Right ventricle myocardium inferior (tissue), 1 donor: ENCODE measurements at regions of chr17 and their contacts with region 1.

Region 1: DNA sequence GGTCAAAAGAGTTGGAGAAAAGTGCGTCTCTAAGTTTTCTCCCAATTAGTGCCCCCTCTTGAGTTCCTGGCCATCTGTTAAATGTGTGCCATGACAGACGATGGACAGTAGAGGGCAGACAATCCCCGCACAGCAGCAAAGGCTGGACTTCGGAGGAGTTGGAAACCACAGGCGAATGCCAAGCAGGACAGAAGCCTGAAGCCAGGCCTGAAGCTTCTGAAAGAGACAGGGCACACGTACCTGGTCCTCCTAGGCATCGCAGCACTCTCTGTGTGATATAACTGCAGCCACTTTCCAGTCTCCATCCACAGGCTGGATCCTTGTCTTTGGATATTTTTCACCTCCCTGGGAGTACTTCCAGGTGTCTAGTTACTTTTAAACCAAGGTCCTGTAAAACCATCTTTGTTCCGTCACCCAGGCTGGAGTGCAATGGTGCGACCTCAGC is 14.5 kb downstream of the C17orf100 start:
- DNase-seq: no peak
- ATAC-seq: peak; percentile 93

Region 2: GRCh38 chr17:6548578-6549330 is 117.3 kb before region 1 on chr17:
- intact Hi-C with region 1: no loop called
- DNase-seq: no peak
- ATAC-seq: peak; percentile 73

Region 3: GRCh38 chr17:6800422-6801027 is 134.4 kb after region 1 on chr17:
- intact Hi-C with region 1: loop called (anchors 2 kb)
- DNase-seq: no peak
- ATAC-seq: no peak

Region 4: DNA sequence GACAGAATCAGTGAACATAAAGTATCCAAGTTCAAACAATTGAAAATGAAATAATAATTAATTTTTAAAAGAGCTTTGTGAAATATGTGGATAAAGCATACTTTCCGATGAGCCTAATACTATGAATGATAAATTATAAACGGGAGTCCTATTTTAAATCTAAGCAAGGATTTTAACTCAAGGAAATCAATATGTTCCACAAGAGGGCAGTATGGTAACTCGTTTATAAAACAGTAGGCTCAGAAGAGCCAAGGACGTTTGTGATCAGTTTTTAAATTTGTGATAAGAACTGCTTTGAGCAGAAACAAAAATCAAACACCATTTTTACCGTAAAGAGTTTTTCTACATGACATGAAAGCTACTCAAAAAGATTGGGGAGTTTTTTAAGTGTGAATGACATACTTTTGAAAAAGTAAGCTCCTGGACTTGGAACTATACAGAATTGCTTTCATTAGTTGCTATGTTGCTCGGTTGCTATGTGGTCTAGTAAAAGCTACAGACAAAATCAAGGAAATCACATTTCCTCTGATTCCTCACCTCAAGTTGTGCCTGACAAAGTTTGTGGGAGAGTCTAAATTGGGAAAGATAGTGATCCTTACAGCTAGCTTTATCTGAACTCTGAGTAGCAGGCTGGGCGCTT is 177.3 kb after region 1 on chr17:
- intact Hi-C with region 1: loop called (anchors 1 kb)
- DNase-seq: no peak
- ATAC-seq: no peak